GM23248 (cell line): ENCODE measurements at regions of chr1 and their contacts with region 1.

Region 1: GRCh38 chr1:84156210-84156621 is 12.1 kb downstream of the PRKACB start:
- DNase-seq: peak; percentile 72
- H3K4me3 ChIP-seq: no peak overlapping the region
- H3K27ac ChIP-seq: no peak overlapping the region
- H3K4me1 ChIP-seq: peaks cover 8% of the 10 kb centered on the region
- H3K27me3 ChIP-seq: no peaks in the 10 kb centered on the region

Region 2: DNA sequence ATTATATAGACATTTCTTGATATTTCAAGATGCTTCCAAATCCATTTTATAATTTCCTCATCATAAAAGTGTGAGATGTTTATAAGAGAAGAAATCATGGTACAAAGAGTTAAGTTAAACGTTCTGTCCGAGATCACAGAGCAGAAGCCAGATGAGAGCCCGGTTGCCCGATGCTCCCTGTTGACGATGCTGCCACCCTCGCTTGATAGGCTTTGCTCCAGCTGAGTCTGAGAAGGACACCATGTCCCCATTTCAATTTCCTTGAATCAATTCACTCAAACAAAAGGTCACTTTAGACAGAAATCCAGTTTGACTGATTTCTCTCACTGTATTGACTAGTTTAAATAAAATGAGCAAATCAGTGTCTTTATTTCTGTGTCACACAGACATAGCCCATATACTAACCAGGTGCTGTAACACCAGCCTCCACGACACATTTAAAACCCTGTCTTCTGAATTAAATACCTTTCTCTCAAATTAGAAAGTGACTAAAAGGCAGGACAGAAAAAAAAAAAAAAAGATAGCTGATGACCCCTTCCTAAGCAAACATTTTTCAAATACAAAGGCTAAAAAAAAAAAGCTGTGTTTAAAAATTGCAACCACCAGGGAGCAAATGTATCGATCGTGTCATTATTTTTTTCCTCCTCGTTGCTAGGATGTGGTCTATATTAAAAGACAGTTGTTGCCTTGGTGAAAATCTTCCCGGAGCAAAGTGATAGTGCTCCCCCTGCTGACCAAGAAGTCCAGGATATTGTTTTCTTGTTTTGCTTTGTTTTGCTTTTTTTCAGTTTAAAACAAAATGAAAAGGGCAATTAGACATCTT is 277.3 kb after region 1 on chr1:
- in situ Hi-C with region 1: loop called (anchors 10 kb)
- DNase-seq: peak; percentile 81
- H3K4me3 ChIP-seq: peak overlapping the region; percentile 65
- H3K27ac ChIP-seq: no peak overlapping the region
- H3K4me1 ChIP-seq: peaks cover 9% of the 10 kb centered on the region; the same call in 1 of the 2 replicates
- H3K27me3 ChIP-seq: no peaks in the 10 kb centered on the region

Region 3: GRCh38 chr1:84620720-84621313 is 464.6 kb after region 1 on chr1:
- in situ Hi-C with region 1: loop called (anchors 25 kb)
- DNase-seq: peak; percentile 87
- H3K4me3 ChIP-seq: peak overlapping the region; percentile 71
- H3K27ac ChIP-seq: peak overlapping the region; percentile 95
- H3K4me1 ChIP-seq: peaks cover 16% of the 10 kb centered on the region
- H3K27me3 ChIP-seq: no peaks in the 10 kb centered on the region

Region 4: DNA sequence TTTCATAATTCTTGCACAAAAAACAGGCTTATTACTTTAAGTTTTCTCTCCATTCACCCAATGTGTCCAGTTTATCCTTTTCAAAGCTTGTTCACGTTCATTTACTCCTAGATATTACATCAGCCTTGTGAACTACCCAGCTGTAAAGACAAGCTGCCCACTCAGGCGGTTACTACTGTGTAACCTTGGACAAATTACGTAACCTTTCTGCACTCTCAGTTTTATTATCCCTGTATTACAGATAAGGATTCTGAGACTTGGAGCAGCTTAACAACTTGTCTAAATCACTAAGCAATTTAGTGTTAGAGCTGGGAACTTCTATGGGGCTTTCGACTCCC is 757.3 kb after region 1 on chr1:
- in situ Hi-C with region 1: loop called (anchors 10 kb)
- DNase-seq: peak; percentile 32
- H3K4me3 ChIP-seq: no peak overlapping the region
- H3K27ac ChIP-seq: no peak overlapping the region
- H3K4me1 ChIP-seq: no peaks in the 10 kb centered on the region
- H3K27me3 ChIP-seq: no peaks in the 10 kb centered on the region